ENCODE measurements at regions of chr6 and their contacts with region 1.

Region 1: GRCh38 chr6:130020907-130021629 is 2.7 kb downstream of the L3MBTL3 start:
- DNase-seq: peak; percentile 72
- ATAC-seq: peak; percentile 36
- H3K4me3 Mint-ChIP-seq: peak overlapping the region; percentile 94
- H3K27ac Mint-ChIP-seq: no peak overlapping the region
- H3K4me1 Mint-ChIP-seq: peaks cover 21% of the 10 kb centered on the region
- H3K27me3 Mint-ChIP-seq: peaks cover 4% of the 10 kb centered on the region; the same call in 1 of the 2 replicates
- CTCF ChIP-seq: peak; percentile 53

Region 2: DNA sequence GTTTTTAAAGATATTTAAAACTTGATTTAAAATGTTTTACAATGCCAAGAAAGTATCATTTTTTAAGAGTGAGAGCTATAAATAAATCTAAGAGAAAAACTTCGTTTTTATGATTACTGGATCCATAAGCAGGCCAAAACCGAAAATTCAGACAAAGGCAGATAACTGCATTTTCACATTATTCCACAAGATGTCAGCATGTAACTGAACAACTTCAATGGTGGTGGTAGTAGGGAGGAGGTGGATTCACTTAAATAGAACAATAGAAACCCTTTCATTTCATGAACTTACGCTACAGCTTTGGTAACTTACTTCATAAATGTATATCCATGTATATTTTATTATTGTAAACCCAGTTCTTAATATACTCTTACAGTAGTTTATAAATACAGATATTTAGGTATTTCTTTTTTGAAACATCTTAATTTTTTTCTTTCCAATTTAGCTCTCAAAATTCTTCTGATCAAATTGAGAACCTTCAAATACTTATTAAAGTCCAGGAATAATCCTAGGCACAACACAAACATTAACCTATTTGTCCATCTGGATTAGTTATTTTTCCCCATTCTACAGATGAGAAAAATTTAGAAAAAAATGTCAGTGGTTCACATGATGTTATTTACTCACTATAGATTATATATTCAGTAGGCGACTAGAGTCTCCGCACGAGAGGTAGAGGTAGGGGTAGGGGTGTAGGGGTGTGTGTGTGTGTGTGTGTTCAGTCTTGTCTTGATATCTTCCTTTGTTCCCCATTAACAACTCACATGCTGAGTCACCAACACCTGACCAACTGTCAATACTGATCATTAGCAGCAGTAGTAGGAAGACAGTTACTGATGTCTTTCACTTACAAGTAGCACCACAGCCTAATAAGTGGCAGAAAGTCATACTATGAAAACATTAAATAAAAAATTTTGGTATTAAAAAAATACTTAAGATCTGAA is 422.6 kb before region 1 on chr6:
- CTCF ChIA-PET with region 1: interaction called, 12 read pairs
- POLR2A ChIA-PET with region 1: no interaction called
- DNase-seq: no peak
- ATAC-seq: peak; percentile 72
- H3K4me3 Mint-ChIP-seq: no peak overlapping the region
- H3K27ac Mint-ChIP-seq: no peak overlapping the region
- H3K4me1 Mint-ChIP-seq: peaks cover 7% of the 10 kb centered on the region; the same call in 1 of the 2 replicates
- H3K27me3 Mint-ChIP-seq: no peaks in the 10 kb centered on the region
- CTCF ChIP-seq: peak; percentile 53; the same call in 1 of the 2 replicates

Region 3: DNA sequence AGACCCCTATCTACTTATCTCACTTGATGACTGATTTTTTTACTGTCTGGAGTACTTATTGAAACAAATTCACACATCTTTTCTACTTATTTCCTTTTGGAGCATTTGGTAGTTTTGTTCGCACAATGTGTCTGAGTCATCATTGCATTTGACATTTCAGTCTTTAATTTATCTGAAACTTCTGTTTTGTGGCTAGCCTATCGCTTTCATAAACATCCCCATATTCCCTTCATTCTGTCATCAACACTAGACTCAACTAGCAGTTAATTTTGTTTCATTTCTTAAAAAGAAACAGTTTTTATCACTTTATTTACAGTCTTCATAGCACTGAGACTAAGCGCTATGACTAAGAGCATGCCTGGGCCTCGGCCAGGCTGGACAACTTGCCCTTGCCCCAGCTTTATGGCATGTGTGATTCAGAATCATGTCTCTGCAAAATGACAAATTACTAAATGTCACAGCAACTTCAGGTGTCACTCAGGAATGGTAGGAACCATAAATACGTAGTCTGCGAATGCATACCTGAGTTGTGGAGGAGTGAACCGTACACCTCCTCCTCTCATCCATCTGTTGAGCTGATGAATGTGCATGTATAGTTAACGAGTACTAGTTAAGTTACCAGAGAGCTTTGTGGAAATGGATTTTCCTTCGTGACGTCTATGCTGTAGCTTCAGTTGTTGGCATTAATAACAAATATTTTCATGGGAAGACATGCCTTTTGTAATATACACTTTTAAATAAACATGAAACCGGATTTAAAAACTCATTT is 13.5 kb after region 1 on chr6:
- CTCF ChIA-PET with region 1: interaction called, 10 read pairs
- POLR2A ChIA-PET with region 1: no interaction called
- DNase-seq: no peak
- ATAC-seq: no peak
- H3K4me3 Mint-ChIP-seq: no peak overlapping the region
- H3K27ac Mint-ChIP-seq: 0 out of 2 replicates have a peak overlapping the region, but pooled peaks have one; percentile 58
- H3K4me1 Mint-ChIP-seq: peaks cover 17% of the 10 kb centered on the region
- H3K27me3 Mint-ChIP-seq: no peaks in the 10 kb centered on the region
- CTCF ChIP-seq: no peak

Region 4: GRCh38 chr6:130269969-130270635 is 249.0 kb after region 1 on chr6:
- CTCF ChIA-PET with region 1: no interaction called
- POLR2A ChIA-PET with region 1: no interaction called
- DNase-seq: no peak
- ATAC-seq: no peak
- H3K4me3 Mint-ChIP-seq: no peak overlapping the region
- H3K27ac Mint-ChIP-seq: no peak overlapping the region
- H3K4me1 Mint-ChIP-seq: no peaks in the 10 kb centered on the region
- H3K27me3 Mint-ChIP-seq: no peaks in the 10 kb centered on the region
- CTCF ChIP-seq: no peak